ENCODE measurements at regions of chr12 and their contacts with region 1.

Region 1: DNA sequence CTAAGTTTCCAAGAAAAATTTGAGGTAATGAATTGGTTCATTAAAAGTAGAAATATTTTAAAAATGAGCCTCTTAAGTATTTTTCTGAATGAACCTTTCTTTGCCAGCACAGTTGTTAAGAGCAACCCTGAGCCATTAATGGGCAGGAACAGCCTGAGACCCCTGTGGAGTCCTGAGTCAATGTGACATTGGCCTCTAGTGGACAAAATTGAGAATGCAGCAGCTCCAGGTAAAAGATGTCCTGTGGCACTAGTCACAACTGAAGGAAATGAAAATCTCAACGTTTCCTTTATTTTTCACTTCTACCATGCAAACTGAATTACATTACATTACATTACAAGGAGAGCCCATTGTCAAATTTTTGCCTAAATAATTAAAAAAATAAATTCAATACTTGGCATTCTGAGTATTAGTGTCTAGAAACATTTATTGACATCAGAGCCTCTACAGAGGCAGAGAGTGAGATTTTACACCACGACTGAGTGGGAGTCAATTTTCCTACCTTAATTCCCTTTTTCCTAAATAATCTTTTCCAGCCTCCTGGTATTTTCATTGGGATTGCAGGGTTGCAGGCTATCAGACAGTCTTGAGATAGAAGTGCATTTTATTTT is 135.7 kb downstream of the PPM1H start:
- DNase-seq: peak in 2 of 4 donors; percentile 44 to 74
- ATAC-seq: peak; percentile 92
- H3K4me3 ChIP-seq: no peak overlapping the region
- H3K27ac ChIP-seq: no peak overlapping the region
- H3K4me1 ChIP-seq: peaks cover 0 to 4% of the 10 kb centered on the region in 2 donors
- H3K27me3 ChIP-seq: no peaks in the 10 kb centered on the region
- CTCF ChIP-seq: peak; percentile 89 to 94

Region 2: GRCh38 chr12:62435303-62436163 is 363.7 kb before region 1 on chr12:
- intact Hi-C with region 1: loop called in 1 of 2 experiments (anchors 10 kb)
- DNase-seq: peak; percentile 25 to 72 (median 52)
- ATAC-seq: peak; percentile 84
- H3K4me3 ChIP-seq: peak overlapping the region; percentile 18 to 33
- H3K27ac ChIP-seq: no peak overlapping the region
- H3K4me1 ChIP-seq: peaks cover 13 to 19% of the 10 kb centered on the region in 2 donors
- H3K27me3 ChIP-seq: peaks cover 10 to 50% of the 10 kb centered on the region in 2 donors
- CTCF ChIP-seq: peak in 1 of 2 donors; percentile 37

Region 3: GRCh38 chr12:62581288-62582064 is 217.8 kb before region 1 on chr12:
- intact Hi-C with region 1: loop called in 1 of 2 experiments (anchors 5 kb)
- DNase-seq: peak in 2 of 4 donors; percentile 34 to 56
- ATAC-seq: peak; percentile 93
- H3K4me3 ChIP-seq: no peak overlapping the region
- H3K27ac ChIP-seq: no peak overlapping the region
- H3K4me1 ChIP-seq: no peaks in the 10 kb centered on the region
- H3K27me3 ChIP-seq: no peaks in the 10 kb centered on the region
- CTCF ChIP-seq: peak; percentile 46 to 53

Region 4: GRCh38 chr12:63028951-63029350 is 229.7 kb after region 1 on chr12:
- intact Hi-C with region 1: no loop called
- DNase-seq: no peak
- ATAC-seq: no peak
- H3K4me3 ChIP-seq: no peak overlapping the region
- H3K27ac ChIP-seq: no peak overlapping the region
- H3K4me1 ChIP-seq: no peaks in the 10 kb centered on the region
- H3K27me3 ChIP-seq: no peaks in the 10 kb centered on the region
- CTCF ChIP-seq: no peak